HepG2 (cell line): ENCODE measurements at regions of chr13 and their contacts with region 1.

Region 1: GRCh38 chr13:108508263-108508662 is 121.1 kb upstream of the MYO16 start:
- DNase-seq: peak; percentile 2
- ATAC-seq: peak; percentile 42; the same call in 1 of the 3 replicates
- H3K4me3 ChIP-seq: no peak overlapping the region
- H3K27ac ChIP-seq: no peak overlapping the region
- H3K4me1 ChIP-seq: no peaks in the 10 kb centered on the region
- H3K27me3 ChIP-seq: no peaks in the 10 kb centered on the region
- CTCF ChIP-seq: peak; percentile 29; the same call in 1 of the 2 replicates
- EP300 ChIP-seq: no peak
- POLR2A ChIP-seq: no peak
- RAD21 ChIP-seq: no peak

Region 2: GRCh38 chr13:108227651-108228272 is 280.5 kb before region 1 on chr13:
- CTCF ChIA-PET with region 1: no interaction called
- POLR2A ChIA-PET with region 1: no interaction called
- in situ Hi-C with region 1: no loop called
- intact Hi-C with region 1: loop called (anchors 5 kb)
- DNase-seq: peak; percentile 21
- ATAC-seq: no peak
- H3K4me3 ChIP-seq: no peak overlapping the region
- H3K27ac ChIP-seq: no peak overlapping the region
- H3K4me1 ChIP-seq: peaks cover 31% of the 10 kb centered on the region
- H3K27me3 ChIP-seq: no peaks in the 10 kb centered on the region
- CTCF ChIP-seq: peak; percentile 58
- EP300 ChIP-seq: no peak
- POLR2A ChIP-seq: no peak
- RAD21 ChIP-seq: no peak

Region 3: DNA sequence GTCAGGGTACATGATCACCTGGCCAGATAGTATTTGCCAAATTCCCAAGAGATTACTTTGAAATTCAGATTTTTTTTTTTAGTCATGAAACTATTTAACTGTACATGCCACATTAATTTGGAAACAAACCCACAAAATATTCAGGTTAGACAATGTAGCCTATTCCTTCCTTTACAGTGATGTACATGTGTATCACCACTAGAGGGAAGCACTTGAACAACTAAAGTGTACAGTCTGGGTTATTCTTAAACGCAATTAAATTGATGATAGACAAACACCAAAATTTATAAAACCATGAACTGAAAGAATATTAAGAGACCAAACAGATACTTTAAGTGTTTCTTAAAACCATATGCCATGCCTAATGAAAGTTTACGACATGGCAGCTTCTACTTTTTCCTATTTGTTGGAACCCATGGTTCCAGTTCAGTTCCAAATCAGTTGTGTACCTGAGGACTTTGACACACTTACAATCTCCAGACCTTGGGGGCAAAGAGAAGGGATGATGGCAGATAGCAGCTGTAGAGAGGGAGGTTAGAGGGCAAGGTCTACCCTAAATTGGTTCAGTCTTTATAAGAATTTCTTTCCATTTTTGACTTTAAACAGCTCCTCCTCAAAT is 185.9 kb before region 1 on chr13:
- CTCF ChIA-PET with region 1: interaction called, 6 read pairs
- POLR2A ChIA-PET with region 1: no interaction called
- in situ Hi-C with region 1: no loop called
- intact Hi-C with region 1: loop called (anchors 5 kb)
- DNase-seq: peak; percentile 23
- ATAC-seq: peak; percentile 84
- H3K4me3 ChIP-seq: no peak overlapping the region
- H3K27ac ChIP-seq: no peak overlapping the region
- H3K4me1 ChIP-seq: no peaks in the 10 kb centered on the region
- H3K27me3 ChIP-seq: no peaks in the 10 kb centered on the region
- CTCF ChIP-seq: peak; percentile 70
- EP300 ChIP-seq: no peak
- POLR2A ChIP-seq: no peak
- RAD21 ChIP-seq: 0 out of 2 replicates have a peak, but pooled peaks have one; percentile 16

Region 4: DNA sequence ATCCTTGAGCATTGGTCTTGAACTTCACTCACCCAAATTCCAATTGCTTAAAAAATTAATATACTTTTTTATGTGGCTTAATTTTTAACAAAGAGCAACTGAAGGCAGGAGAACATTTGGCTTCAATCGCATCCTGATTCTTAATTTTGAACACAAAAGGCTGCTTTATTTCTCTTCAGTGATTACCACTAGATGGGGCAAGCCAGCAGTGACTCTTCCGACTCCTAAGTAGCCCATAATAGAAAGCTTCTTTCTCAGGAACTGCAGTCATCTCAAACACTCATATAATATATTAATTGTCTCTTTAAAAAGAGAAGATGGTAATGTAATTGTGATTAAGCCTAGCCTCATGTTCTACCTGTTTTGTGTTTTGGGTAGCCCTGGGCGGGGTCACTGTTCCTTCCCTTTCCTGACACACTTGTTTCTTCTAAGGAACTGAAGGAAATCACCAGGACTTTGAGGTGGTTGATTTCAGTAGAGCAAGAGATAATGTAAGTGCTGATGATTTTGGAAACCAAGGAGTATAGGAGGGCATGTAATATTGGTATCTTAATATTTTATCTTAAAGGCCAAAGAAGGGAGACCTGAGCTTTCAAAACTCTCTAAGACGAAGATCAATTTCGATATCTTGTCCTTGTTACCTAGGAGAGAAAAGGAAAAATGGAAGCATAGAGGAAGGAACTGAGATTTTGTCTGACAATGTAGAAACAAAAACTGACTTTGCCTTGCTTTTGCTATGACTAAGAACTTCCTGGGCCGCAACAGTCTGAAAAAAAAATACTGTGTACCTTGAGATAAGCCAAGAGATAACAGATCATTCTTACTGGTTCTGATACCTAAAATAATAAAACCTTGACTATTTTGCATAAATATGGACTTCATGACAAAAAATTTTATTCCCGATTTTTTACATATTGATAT is 165.6 kb before region 1 on chr13:
- CTCF ChIA-PET with region 1: no interaction called
- POLR2A ChIA-PET with region 1: no interaction called
- in situ Hi-C with region 1: no loop called
- intact Hi-C with region 1: loop called (anchors 5 kb)
- DNase-seq: peak; percentile 15
- ATAC-seq: peak; percentile 38; the same call in 1 of the 3 replicates
- H3K4me3 ChIP-seq: no peak overlapping the region
- H3K27ac ChIP-seq: no peak overlapping the region
- H3K4me1 ChIP-seq: no peaks in the 10 kb centered on the region
- H3K27me3 ChIP-seq: no peaks in the 10 kb centered on the region
- CTCF ChIP-seq: peak; percentile 35; the same call in 1 of the 2 replicates
- EP300 ChIP-seq: no peak
- POLR2A ChIP-seq: no peak
- RAD21 ChIP-seq: no peak

Region 5: GRCh38 chr13:108889324-108889984 is 381.2 kb after region 1 on chr13:
- CTCF ChIA-PET with region 1: no interaction called
- POLR2A ChIA-PET with region 1: no interaction called
- in situ Hi-C with region 1: no loop called
- intact Hi-C with region 1: no loop called
- DNase-seq: no peak
- ATAC-seq: no peak
- H3K4me3 ChIP-seq: no peak overlapping the region
- H3K27ac ChIP-seq: no peak overlapping the region
- H3K4me1 ChIP-seq: no peaks in the 10 kb centered on the region
- H3K27me3 ChIP-seq: no peaks in the 10 kb centered on the region
- CTCF ChIP-seq: no peak
- EP300 ChIP-seq: no peak
- POLR2A ChIP-seq: no peak
- RAD21 ChIP-seq: no peak